ENCODE measurements at regions of chr19 and their contacts with region 1.

Region 1: DNA sequence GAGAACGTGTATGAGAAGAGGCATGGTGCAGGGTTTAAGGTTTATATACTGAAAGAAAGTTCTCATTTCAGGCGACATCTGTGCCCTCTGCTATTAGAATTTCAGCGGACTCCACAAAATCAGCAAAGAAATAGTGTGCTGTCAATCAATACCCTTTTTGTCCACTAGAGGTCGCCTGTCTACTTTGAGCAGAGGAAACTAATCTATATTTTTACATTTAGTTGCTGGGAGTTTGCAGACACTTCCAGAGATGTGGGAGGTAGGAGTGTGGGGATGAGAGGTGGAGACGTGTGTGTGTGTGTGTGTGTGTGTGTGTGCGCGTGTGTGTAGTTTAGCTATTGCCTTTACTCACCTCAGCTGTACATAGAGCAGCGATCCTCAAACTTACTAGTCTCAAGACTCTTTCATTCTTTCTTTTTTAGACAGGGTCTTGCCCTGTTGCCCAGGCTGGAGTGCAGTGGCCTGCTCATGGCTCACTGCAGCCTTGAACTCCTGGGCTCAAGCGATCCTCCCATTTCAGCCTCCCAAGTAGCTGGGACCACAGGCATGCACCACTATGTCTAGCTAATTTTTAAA is 9.7 kb downstream of the INAFM1 start:
- DNase-seq: peak; percentile 56
- H3K4me3 ChIP-seq: no peak overlapping the region
- H3K27ac ChIP-seq: no peak overlapping the region
- H3K4me1 ChIP-seq: peaks cover 0 to 8% of the 10 kb centered on the region in 2 experiments; a peak in 2 of 4 replicates
- H3K27me3 ChIP-seq: no peaks in the 10 kb centered on the region
- CTCF ChIP-seq: peak; percentile 88
- EP300 ChIP-seq: no peak
- RAD21 ChIP-seq: peak; percentile 66

Region 2: GRCh38 chr19:47247329-47247886 is 37.0 kb before region 1 on chr19:
- CTCF ChIA-PET with region 1: no interaction called
- POLR2A ChIA-PET with region 1: no interaction called
- DNase-seq: peak; percentile 74
- H3K4me3 ChIP-seq: peak overlapping the region in 1 of 2 experiments; percentile 39; a peak in 1 of 4 replicates
- H3K27ac ChIP-seq: no peak overlapping the region
- H3K4me1 ChIP-seq: peaks cover 0 to 10% of the 10 kb centered on the region in 2 experiments; a peak in 2 of 4 replicates
- H3K27me3 ChIP-seq: no peaks in the 10 kb centered on the region
- CTCF ChIP-seq: peak; percentile 96
- EP300 ChIP-seq: no peak
- RAD21 ChIP-seq: peak; percentile 70

Region 3: DNA sequence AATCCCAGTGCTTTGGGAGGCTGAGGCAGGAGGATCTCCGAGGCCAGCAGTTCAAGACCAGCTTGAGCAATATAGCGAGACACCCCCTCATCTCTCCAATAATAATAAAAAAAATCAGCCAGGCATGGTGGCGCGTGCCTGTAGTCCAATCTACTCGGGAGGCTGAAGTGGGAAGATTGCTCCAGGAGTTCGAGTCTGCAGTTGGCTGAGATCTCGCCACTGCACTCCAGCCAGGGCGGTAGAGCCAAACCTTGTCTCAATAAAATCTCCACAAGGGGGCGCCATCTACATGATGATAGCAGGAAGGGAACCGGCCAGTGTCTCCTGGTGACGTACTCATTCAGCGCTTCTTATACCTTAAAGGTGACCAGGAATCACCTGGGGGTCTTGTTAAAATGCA is 11.6 kb after region 1 on chr19:
- CTCF ChIA-PET with region 1: interaction called, 58 read pairs
- POLR2A ChIA-PET with region 1: interaction called, 3 read pairs
- DNase-seq: peak; percentile 78
- H3K4me3 ChIP-seq: peak overlapping the region in 1 of 2 experiments; percentile 23; a peak in 1 of 4 replicates
- H3K27ac ChIP-seq: no peak overlapping the region
- H3K4me1 ChIP-seq: no peaks in the 10 kb centered on the region
- H3K27me3 ChIP-seq: no peaks in the 10 kb centered on the region
- CTCF ChIP-seq: peak; percentile 78
- EP300 ChIP-seq: no peak
- RAD21 ChIP-seq: peak; percentile 91

Region 4: DNA sequence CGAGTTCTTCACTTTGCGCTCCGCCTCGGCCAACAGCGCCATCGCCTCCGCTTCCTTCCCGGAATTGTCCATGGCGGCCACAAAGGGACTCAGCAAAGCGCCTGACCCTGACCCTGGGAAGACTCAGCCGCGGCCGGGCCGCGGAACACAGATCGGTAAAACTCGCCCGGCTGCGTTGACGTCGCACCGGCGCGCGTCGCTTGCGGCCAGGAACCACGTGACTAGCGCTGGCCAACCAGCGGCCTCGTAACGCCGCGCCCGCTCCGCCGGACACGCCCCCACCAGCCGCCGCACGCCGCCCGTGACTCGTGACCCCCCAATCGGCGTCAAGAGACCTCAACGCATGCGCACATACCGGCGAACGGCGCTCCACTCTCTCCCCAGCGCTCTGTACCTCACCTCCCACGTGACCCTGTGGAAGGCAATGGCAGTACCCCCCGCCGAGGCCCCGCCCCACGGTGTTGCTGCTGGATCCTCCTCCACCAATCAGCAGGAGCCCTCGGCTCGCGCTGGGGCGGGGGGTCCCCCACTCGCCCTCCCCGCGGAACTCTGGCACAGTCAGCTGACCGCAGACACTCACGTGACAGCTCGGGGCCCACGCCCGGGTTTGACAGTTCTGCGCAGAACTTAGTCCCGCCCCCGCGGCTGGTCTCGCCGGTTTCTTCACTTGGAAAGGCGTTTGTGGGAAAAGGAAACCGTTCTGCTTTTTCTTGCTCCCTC is 230.6 kb after region 1 on chr19 and contains the start of gene NAPA:
- CTCF ChIA-PET with region 1: no interaction called
- POLR2A ChIA-PET with region 1: no interaction called
- DNase-seq: peak; percentile 99
- H3K4me3 ChIP-seq: peak within 1 kb of the TSS; percentile 91 to 97
- H3K27ac ChIP-seq: peak within 1 kb of the TSS; percentile 81 to 88
- H3K4me1 ChIP-seq: peaks cover 15 to 16% of the 10 kb centered on the region in 2 experiments; a peak in 3 of 4 replicates
- H3K27me3 ChIP-seq: no peaks in the 10 kb centered on the region
- CTCF ChIP-seq: no peak
- EP300 ChIP-seq: peak in 1 of 2 experiments; percentile 60; a peak in 1 of 4 replicates
- RAD21 ChIP-seq: peak; percentile 81
- polyA plus RNA-seq, gene NAPA: 80.0 and 84.1 TPM in 2 replicates

Region 5: GRCh38 chr19:47637550-47637949 is 353.1 kb after region 1 on chr19:
- CTCF ChIA-PET with region 1: no interaction called
- POLR2A ChIA-PET with region 1: no interaction called
- DNase-seq: no peak
- H3K4me3 ChIP-seq: no peak overlapping the region
- H3K27ac ChIP-seq: no peak overlapping the region; a peak in 1 of 4 replicates
- H3K4me1 ChIP-seq: peaks cover 0 to 5% of the 10 kb centered on the region in 2 experiments; a peak in 2 of 4 replicates
- H3K27me3 ChIP-seq: no peaks in the 10 kb centered on the region
- CTCF ChIP-seq: no peak
- EP300 ChIP-seq: no peak
- RAD21 ChIP-seq: no peak

Measured in SK-N-SH (cell line).